HepG2 (cell line): ENCODE measurements at regions of chr12 and their contacts with region 1.

Region 1: DNA sequence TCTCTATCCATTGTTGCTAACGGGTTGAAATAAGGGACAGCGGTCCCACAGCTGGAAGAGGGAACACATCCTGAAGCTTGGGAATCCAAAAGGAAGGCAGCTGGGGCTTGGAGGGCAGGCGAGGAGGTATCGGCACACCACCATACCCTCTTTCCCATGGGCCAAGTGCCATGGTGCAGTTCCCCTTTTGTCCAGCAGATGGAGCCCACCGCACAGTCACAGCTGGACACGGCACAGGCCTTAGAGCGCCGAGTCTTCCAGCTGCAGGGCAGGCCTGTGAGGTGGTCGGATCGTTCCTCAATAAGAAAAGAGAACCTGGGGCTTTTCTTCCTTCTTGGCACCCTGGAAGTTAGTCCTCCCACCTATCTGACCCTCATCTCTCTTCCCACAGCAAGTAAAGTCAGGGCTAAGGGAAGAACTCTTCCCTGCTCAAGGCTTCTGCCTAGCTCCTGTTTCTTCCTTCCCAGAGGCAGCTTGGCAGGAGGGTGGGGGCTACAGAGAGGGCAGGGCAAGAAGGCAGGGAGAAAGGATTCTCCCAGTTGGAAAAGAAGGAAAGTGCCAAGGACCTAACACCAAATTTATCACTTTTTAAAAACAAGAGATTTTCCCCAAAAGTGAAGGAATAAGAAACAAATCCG is 8.6 kb downstream of the PPP1R1A start:
- DNase-seq: peak; percentile 49
- ATAC-seq: peak; percentile 97
- H3K4me3 ChIP-seq: no peak overlapping the region
- H3K27ac ChIP-seq: no peak overlapping the region
- H3K4me1 ChIP-seq: no peaks in the 10 kb centered on the region
- H3K27me3 ChIP-seq: peaks cover 0 to 58% of the 10 kb centered on the region in 2 experiments; a peak in 3 of 5 replicates
- CTCF ChIP-seq: peak; percentile 95
- EP300 ChIP-seq: no peak
- POLR2A ChIP-seq: no peak
- RAD21 ChIP-seq: peak; percentile 63; the same call in 1 of the 2 replicates

Region 2: DNA sequence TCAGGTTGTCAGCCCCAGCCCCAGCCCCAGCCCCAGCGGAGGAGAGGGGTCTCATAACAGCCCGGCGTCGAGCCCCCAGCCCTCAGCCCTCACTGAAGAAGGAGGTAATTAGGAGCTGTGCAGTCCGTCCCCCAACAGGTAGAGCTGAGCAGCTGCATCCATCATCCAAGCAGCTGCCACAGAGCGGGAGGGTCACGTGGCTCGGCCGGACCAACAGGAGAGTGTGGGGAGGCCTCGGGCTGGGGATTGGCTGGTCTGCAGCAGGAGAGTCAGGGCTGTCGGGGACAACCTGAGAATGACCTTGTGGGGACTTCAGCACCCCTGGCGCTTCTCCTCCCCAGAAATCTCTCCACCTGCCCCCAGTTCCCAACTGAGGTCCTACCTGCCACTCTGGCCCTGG is 420.7 kb before region 1 on chr12:
- CTCF ChIA-PET with region 1: no interaction called
- POLR2A ChIA-PET with region 1: no interaction called
- in situ Hi-C with region 1: no loop called
- intact Hi-C with region 1: no loop called
- DNase-seq: peak; percentile 61
- ATAC-seq: peak; percentile 95
- H3K4me3 ChIP-seq: peak overlapping the region in 1 of 3 experiments; percentile 21; a peak in 1 of 6 replicates
- H3K27ac ChIP-seq: no peak overlapping the region
- H3K4me1 ChIP-seq: peaks cover 67% of the 10 kb centered on the region
- H3K27me3 ChIP-seq: no peaks in the 10 kb centered on the region; a peak in 1 of 5 replicates
- CTCF ChIP-seq: peak; percentile 29
- EP300 ChIP-seq: no peak
- POLR2A ChIP-seq: no peak
- RAD21 ChIP-seq: no peak

Region 3: GRCh38 chr12:54596526-54596946 is 16.7 kb after region 1 on chr12:
- CTCF ChIA-PET with region 1: interaction called, 8 read pairs
- POLR2A ChIA-PET with region 1: no interaction called
- in situ Hi-C with region 1: no loop called
- intact Hi-C with region 1: loop called (anchors 2 kb)
- DNase-seq: peak; percentile 40
- ATAC-seq: peak; percentile 88
- H3K4me3 ChIP-seq: no peak overlapping the region
- H3K27ac ChIP-seq: no peak overlapping the region
- H3K4me1 ChIP-seq: no peaks in the 10 kb centered on the region
- H3K27me3 ChIP-seq: peaks cover 0 to 35% of the 10 kb centered on the region in 2 experiments; a peak in 3 of 5 replicates
- CTCF ChIP-seq: peak; percentile 73
- EP300 ChIP-seq: no peak
- POLR2A ChIP-seq: no peak
- RAD21 ChIP-seq: no peak

Region 4: GRCh38 chr12:54751493-54751892 is 171.7 kb after region 1 on chr12:
- CTCF ChIA-PET with region 1: no interaction called
- POLR2A ChIA-PET with region 1: no interaction called
- in situ Hi-C with region 1: no loop called
- intact Hi-C with region 1: no loop called
- DNase-seq: no peak
- ATAC-seq: no peak
- H3K4me3 ChIP-seq: no peak overlapping the region
- H3K27ac ChIP-seq: no peak overlapping the region
- H3K4me1 ChIP-seq: no peaks in the 10 kb centered on the region
- H3K27me3 ChIP-seq: no peaks in the 10 kb centered on the region
- CTCF ChIP-seq: no peak
- EP300 ChIP-seq: no peak
- POLR2A ChIP-seq: no peak
- RAD21 ChIP-seq: no peak